Activated naive CD8-positive, alpha-beta T cell treated with anti-CD3 and anti-CD28 coated beads, Interleukin-2, amount 10 ng/mL, durations not matched to agents 7 days and 5 days (primary cell): ENCODE measurements at regions of chr7 and their contacts with region 1.

Region 1: GRCh38 chr7:131107337-131108211 is 220.1 kb upstream of the MKLN1 start:
- DNase-seq: peak; percentile 78
- ATAC-seq: peak; percentile 48
- H3K4me3 Mint-ChIP-seq: peak overlapping the region; percentile 99
- H3K27ac Mint-ChIP-seq: peak overlapping the region; percentile 99
- H3K4me1 Mint-ChIP-seq: peaks cover 45% of the 10 kb centered on the region
- H3K27me3 Mint-ChIP-seq: peaks cover 2% of the 10 kb centered on the region

Region 2: GRCh38 chr7:131057015-131057793 is 50.4 kb before region 1 on chr7:
- POLR2A ChIA-PET with region 1: interaction called, 17 read pairs
- DNase-seq: no peak
- ATAC-seq: peak; percentile 70
- H3K4me3 Mint-ChIP-seq: peak overlapping the region; percentile 78
- H3K27ac Mint-ChIP-seq: peak overlapping the region; percentile 92
- H3K4me1 Mint-ChIP-seq: peaks cover 35% of the 10 kb centered on the region
- H3K27me3 Mint-ChIP-seq: no peaks in the 10 kb centered on the region

Region 3: GRCh38 chr7:131231381-131232220 is 124.0 kb after region 1 on chr7:
- POLR2A ChIA-PET with region 1: interaction called, 24 read pairs
- DNase-seq: peak; percentile 71
- ATAC-seq: peak; percentile 80
- H3K4me3 Mint-ChIP-seq: peak overlapping the region; percentile 80
- H3K27ac Mint-ChIP-seq: peak overlapping the region; percentile 96
- H3K4me1 Mint-ChIP-seq: peaks cover 44% of the 10 kb centered on the region
- H3K27me3 Mint-ChIP-seq: peaks cover 3% of the 10 kb centered on the region

Region 4: DNA sequence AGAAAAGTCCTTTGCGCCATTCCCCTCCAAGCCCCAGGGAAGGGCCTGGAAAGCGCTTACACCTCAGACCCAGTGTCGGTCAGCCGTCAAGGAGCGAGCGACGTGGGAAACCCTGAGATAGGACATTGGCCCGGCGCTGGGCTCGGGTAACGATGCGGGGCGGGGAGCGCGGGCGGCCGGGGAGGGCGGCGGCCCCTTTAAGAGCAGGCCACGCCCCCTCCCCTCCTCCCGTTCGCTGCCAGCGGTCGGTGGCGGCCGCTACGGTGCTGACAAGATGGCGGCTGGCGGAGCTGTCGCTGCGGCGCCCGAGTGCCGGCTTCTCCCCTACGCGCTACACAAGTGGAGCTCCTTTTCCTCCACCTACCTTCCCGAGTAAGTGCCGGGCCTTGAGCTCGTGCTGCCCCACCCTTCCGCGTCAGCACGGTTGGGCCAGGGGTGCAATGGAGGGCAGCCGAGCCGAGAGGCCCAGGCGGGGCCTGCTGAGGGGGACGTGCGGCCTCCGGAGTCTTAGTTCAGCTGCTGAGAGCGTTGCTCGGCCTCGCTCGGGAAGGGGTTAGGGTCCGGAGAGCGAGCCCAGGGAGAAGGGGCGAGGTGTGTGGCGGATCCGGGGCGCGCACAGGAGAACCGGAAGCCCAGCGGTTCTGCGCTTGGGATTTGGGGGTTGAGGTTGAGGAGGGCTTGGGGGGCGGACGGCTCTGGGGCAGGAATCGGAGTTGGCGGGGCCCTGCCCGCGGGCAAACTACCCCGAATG is 220.2 kb after region 1 on chr7 and contains the start of gene MKLN1:
- POLR2A ChIA-PET with region 1: interaction called, 10 read pairs
- DNase-seq: peak; percentile 92
- ATAC-seq: peak; percentile 90
- H3K4me3 Mint-ChIP-seq: peak within 1 kb of the TSS; percentile 98
- H3K27ac Mint-ChIP-seq: peak within 1 kb of the TSS; percentile 97
- H3K4me1 Mint-ChIP-seq: peaks cover 35% of the 10 kb centered on the region
- H3K27me3 Mint-ChIP-seq: no peaks in the 10 kb centered on the region
- total RNA-seq, gene MKLN1: 35.7 to 42.3 TPM